Common myeloid progenitor, CD34-positive (primary cell): ENCODE measurements at regions of chr5 and their contacts with region 1.

Region 1: DNA sequence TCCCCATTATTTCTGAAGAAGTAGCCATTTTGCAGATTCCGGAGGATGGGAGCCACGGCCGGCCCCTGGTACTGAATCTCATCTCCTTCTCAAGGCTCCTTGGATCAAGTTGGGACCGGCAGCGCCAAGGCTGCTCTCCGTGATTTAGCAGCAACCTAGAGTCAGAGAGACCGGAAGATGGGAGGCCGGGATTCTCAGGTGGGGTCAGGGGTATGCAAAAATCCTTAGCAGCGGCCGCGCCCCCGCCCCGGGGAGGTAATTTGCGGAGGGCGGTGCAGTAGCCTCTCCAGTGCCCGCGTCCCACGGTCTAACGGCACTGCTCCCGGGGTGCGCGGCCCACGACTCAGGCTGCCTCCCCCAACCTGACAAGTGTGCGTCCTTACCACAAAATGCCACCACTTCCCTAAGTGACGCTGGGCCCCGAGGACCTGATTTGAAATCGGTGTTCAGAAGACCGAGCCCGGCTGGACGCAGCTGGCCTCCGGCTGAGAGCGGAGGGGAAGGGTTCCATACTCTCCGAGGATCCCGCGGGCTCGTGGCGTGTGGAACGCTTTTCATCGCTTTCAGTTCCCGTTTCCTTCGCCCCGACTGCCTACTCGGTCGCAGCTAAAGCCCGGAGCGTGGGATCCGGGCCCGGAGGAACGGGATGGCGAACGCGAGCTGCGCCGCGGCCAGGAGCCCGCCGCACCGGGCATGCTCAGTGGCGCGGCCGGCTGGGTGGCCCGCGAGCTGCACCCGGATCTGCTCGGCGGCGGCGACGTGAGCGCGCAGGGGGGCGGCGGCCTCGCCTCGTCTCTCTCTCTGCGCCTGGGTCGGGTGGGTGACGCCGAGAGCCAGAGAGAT is at the start of gene SCAMP1:
- DNase-seq: peak; percentile 94 to 97 (median 96)
- H3K4me3 ChIP-seq: peak within 1 kb of the TSS; percentile 92 to 98 (median 96)
- H3K27ac ChIP-seq: peak within 1 kb of the TSS; percentile 61 to 88
- H3K4me1 ChIP-seq: peaks cover 7 to 29% (median 18%) of the 10 kb centered on the region in 4 experiments
- H3K27me3 ChIP-seq: no peaks in the 10 kb centered on the region

Region 2: GRCh38 chr5:77832166-77832770 is 527.8 kb before region 1 on chr5:
- CTCF ChIA-PET with region 1: no interaction called
- POLR2A ChIA-PET with region 1: interaction called, 10 read pairs
- DNase-seq: no peak
- H3K4me3 ChIP-seq: no peak overlapping the region
- H3K27ac ChIP-seq: no peak overlapping the region
- H3K4me1 ChIP-seq: no peaks in the 10 kb centered on the region
- H3K27me3 ChIP-seq: peaks cover 0 to 9% (median 3%) of the 10 kb centered on the region in 5 experiments

Region 3: GRCh38 chr5:78294248-78295034 is 65.6 kb before region 1 on chr5 and contains the start of gene AP3B1:
- CTCF ChIA-PET with region 1: interaction called, 16 read pairs
- POLR2A ChIA-PET with region 1: interaction called, 18 read pairs
- DNase-seq: peak; percentile 98 to 99 (median 99)
- H3K4me3 ChIP-seq: peak within 1 kb of the TSS; percentile 85 to 100 (median 92)
- H3K27ac ChIP-seq: peak within 1 kb of the TSS; percentile 78 to 92
- H3K4me1 ChIP-seq: peaks cover 8 to 20% (median 10%) of the 10 kb centered on the region in 4 experiments
- H3K27me3 ChIP-seq: no peaks in the 10 kb centered on the region